HEK293 (cell line): ENCODE measurements at regions of chr12 and their contacts with region 1.

Region 1: GRCh38 chr12:39605501-39605900 is 14.1 kb downstream of the ABCD2 start:
- H3K4me3 ChIP-seq: no peak overlapping the region
- H3K27ac ChIP-seq: no peak overlapping the region
- H3K4me1 ChIP-seq: 0 out of 2 replicates have a peak, but pooled peaks cover 3% of the 10 kb centered on the region
- CTCF ChIP-seq: no peak

Region 2: DNA sequence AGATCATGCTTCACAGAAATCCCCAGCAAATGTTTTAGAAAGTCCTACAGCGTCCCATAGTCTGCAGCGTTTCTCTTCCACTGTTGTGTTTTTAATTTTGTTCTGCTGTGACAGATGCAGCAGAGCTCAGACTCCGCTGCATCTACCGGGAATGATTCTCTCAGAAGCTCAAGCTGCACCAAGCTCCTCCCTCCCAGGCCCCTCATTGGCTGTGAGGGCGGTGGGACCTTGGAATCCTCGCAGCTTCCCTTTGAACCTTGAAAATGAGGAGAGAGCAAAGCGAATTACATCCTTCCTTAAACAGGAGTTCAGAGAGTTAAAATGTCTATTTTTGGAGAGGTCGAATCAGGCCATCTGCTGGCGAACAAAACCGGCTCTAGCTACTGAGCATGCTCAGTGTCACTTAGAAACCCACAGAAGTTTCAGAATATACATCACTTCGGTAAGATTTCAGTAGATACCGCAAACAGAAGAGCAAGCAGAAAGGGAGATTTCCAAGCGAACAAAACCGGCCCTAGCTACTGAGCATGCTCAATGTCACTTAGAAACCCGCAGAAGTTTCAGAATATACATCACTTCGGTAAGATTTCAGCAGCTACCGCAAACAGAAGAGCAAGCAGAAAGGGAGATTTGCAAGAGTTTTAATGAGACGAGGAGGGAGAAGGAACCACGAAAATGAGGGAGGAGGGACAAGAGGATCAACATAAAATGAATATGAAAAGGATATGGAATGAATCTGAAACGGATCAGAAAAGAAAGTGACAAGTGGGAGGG is 14.3 kb after region 1 on chr12 and contains the start of gene ABCD2:
- CTCF ChIA-PET with region 1: interaction called, 8 read pairs
- POLR2A ChIA-PET with region 1: interaction called, 10 read pairs
- H3K4me3 ChIP-seq: peak within 1 kb of the TSS; percentile 55
- H3K27ac ChIP-seq: peak within 1 kb of the TSS; percentile 61
- H3K4me1 ChIP-seq: 0 out of 2 replicates have a peak, but pooled peaks cover 3% of the 10 kb centered on the region
- CTCF ChIP-seq: no peak